GM23248 (cell line): ENCODE measurements at regions of chr11 and their contacts with region 1.

Region 1: GRCh38 chr11:49995565-49995964 is 13.2 kb upstream of the OR4C12 start:
- DNase-seq: peak; percentile 86
- H3K4me3 ChIP-seq: no peak overlapping the region
- H3K27ac ChIP-seq: no peak overlapping the region
- H3K4me1 ChIP-seq: no peaks in the 10 kb centered on the region
- H3K27me3 ChIP-seq: no peaks in the 10 kb centered on the region

Region 2: DNA sequence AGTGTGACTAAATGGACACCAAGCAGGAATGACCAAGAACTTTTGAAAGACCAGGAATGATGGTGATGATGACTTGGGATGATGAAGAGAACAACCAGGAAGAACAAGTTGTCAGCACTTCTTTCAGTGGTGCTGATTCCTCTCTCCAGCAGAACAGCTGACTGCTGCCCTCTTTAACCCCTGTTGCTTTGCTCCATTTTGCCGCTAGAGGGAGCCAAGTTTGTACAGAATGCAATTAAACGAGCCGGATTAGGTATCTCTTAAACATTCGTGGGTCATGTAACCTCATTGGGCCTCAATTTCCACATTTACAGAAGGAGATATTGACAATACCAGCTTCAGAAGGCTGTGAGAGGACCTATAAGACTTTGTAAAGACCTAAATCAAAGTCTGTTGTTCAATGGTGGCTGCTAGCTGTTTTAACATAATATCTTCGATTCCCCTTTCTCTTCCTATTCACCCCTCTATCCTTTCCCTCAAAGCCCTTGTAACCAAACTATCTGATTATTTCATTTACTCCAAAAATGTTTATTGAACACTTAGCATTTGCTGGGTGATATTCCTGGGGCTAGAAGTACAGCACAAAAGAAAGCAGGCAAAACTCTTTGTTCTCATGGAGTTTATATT is 1687.7 kb before region 1 on chr11:
- in situ Hi-C with region 1: loop called (anchors 25 kb)
- DNase-seq: peak; percentile 69
- H3K4me3 ChIP-seq: no peak overlapping the region
- H3K27ac ChIP-seq: no peak overlapping the region
- H3K4me1 ChIP-seq: no peaks in the 10 kb centered on the region
- H3K27me3 ChIP-seq: no peaks in the 10 kb centered on the region

Region 3: DNA sequence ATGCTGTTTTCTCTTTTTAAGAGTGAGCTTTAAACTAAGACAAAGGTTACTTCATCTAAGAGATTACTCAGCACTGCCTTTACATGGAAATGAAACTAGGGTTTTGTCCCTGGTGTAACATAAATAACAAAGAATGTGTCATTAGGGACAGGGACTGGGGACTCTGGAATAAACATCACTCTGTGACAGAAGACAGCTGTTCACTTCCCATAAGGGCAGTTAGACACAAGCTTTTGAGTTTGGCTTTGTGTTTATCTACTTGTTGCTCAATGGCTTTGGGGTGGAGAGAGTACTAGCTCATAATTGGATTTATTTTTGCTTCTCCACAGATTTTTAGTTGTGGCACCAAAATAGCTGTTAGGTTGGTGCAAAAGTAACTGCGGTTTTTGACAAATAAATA is 191.7 kb after region 1 on chr11:
- in situ Hi-C with region 1: no loop called
- DNase-seq: no peak
- H3K4me3 ChIP-seq: no peak overlapping the region
- H3K27ac ChIP-seq: no peak overlapping the region
- H3K4me1 ChIP-seq: no peaks in the 10 kb centered on the region
- H3K27me3 ChIP-seq: no peaks in the 10 kb centered on the region